ENCODE measurements at regions of chr5 and their contacts with region 1.

Region 1: DNA sequence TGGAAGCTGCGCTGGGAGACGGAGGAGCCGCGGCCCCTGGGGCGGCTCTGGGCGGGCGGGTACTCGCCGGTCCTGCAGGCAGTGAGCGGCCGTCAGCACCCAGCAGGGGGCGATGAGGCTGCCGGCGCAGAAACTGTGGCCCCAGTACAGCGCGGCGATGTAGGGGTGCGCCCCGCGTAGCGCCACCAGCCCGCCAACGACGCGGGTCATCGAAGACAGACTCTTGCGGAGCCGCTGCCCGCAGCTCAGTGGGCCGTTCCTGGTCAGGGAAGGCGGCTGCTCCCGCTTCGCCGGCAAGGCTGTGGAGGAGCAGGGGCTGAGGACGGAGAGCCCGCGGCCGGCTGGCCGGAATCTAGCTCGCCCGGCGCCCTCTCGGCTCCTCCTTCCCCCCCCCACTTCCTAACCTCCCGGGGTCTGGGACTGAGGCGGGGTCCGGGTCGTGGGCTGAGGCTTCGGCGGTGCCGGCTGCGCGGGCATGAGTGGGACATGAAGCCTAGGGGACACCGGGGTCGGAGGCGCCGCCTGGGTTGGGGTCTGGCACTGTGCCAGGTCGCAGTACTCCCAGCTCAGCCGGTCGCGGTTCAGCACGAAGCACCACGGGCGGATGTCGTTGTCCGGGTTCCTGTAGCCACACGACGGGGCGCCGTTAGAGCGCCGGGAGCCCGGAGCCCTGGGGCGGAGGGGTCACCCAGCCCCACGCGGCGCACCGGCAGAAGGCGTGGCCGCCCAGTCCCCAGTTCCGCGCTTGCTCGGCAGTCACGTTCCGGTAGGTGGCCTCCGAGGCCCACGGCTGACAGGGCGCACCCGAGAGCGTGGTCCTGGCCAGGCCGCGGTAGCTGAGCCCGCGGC is 3.6 kb upstream of the PFN3 start:
- DNase-seq: peak; percentile 93
- CTCF ChIP-seq: peak; percentile 92

Region 2: GRCh38 chr5:176700239-176700847 is 703.7 kb before region 1 on chr5:
- CTCF ChIA-PET with region 1: no interaction called
- POLR2A ChIA-PET with region 1: no interaction called
- DNase-seq: no peak
- CTCF ChIP-seq: peak; percentile 17

Region 3: GRCh38 chr5:177276886-177277285 is 127.1 kb before region 1 on chr5:
- CTCF ChIA-PET with region 1: no interaction called
- POLR2A ChIA-PET with region 1: no interaction called
- DNase-seq: no peak
- CTCF ChIP-seq: no peak

Region 4: DNA sequence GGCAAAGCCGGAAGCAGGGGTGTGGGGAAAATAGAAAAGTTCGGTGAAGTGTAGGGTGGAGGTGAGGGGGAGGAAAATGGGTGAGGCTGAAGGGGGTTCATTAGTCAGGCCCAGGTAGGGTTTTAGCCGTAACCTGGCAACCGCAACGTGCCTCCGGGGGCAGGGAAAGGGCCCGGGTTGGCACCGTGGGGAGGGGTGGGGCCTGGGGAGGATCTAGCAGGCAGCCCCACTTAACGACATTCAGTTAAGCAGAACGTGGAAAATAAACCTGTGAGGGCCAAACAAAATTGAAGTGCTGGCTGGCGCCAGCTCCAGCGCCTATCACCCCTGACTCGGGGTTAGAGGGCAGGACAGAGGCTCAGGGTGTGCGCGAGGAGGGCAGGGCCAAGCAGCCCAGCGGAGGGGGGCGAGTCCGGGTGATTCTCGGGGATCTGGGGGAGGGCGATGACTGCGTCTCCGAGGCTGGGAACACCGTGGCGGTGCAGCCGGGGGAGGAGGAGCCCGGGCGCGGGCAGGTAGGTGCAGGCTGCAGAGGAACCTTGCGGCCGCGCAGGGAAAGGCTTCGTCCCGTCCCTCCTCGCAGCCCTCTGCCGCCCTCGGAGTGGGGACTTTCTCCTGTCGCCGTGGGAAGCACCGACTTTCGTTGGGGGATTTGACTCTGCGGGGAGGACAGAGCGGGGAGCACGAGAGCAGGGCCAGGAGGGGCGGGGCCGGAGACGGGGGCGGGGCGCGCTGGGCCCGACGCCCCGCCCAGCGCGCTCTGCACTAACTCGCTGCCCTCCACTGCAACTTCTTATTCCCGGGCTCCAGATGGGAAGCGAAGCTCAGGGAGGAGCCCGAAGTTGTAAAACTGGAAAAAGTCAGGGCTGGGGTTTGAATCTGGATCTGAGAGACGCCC is 41.2 kb before region 1 on chr5:
- CTCF ChIA-PET with region 1: interaction called, 29 read pairs
- POLR2A ChIA-PET with region 1: no interaction called
- DNase-seq: peak; percentile 86
- CTCF ChIP-seq: no peak

Region 5: DNA sequence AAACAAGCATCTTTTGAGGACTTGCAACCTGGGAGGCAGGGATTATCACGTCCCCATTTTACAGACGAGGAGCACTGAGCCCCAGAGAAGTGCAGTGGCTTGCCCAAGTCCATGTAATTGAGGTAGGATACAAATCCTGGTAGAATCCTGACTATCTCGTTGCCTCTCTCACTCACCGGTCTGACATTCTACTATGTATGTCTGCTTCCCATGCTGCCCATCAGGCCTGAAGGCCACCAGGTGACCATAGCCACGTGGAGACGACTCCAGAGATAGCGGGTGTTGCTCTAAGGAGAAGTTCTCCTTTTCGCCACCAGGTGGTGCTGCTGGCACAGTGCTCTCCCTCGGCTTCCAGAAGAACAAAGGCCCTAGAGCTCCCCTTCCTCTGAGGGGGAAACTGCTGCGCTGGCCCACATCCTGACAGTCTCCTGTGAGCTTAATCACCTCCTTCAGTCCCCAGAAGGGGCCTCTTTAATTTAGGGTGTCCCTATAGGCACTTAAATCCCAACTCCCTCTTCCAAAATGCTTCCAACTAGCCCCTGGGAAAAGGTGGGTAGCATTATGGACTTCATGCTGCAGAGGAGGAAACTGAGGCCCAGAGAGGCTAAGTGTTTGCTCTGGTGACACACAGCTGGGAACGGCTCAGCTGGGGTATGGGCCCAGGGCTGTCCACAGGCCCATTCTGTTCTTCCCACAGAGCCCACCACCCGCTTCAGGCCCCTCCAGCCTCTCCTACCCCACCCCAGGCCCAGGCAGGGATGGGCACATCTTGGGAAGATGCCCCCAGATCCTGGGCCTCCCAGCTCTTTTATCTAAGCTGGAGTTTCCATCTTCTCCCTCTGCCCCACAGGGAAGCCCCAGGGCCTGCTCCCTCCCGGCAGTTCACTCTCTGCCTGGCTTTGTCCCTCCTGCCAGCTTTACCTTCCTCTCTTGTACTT is 13.4 kb before region 1 on chr5:
- CTCF ChIA-PET with region 1: interaction called, 321 read pairs
- POLR2A ChIA-PET with region 1: interaction called, 4 read pairs
- DNase-seq: peak; percentile 91
- CTCF ChIP-seq: peak; percentile 90

Region 6: DNA sequence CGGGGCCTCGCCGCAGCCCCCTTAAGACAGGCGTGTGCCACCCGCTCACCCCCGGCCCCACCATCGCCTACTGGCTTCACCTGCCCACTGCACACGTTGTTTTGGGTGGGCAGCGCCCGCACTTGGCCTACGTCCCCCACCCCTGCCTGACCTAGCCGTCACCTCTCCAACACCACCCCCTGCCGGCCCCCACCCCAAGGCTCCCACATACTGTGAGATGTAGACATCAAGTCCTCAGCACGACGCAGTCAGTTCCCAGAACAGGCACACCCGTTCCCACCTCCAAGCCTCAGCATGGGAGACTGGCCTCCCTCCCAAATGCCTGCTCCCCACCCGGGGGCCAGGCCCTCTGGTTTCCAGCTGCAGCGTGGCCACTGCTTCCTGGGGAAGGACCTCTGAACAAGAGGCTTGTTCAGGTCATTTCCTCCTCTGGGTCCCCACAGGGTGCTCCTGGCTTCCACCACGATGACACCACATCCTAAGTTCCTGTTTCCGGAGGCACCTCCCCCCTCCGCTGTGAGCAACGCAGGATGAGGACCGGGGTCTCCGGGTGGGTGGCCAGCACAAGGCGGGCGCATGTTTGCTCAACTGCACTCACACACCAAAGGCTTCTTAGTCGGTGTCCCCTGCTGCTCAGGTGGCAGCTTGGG is 58.1 kb after region 1 on chr5:
- CTCF ChIA-PET with region 1: interaction called, 66 read pairs
- POLR2A ChIA-PET with region 1: no interaction called
- DNase-seq: no peak
- CTCF ChIP-seq: no peak

Region 7: GRCh38 chr5:177497292-177498033 is 93.4 kb after region 1 on chr5 and contains the start of gene PDLIM7:
- CTCF ChIA-PET with region 1: interaction called, 45 read pairs
- POLR2A ChIA-PET with region 1: no interaction called
- DNase-seq: peak; percentile 97
- CTCF ChIP-seq: no peak